ENCODE measurements at regions of chr10 and their contacts with region 1.

Region 1: GRCh38 chr10:103685880-103686669 is 169.3 kb downstream of the SH3PXD2A start:
- DNase-seq: peak; percentile 93

Region 2: GRCh38 chr10:103598654-103599115 is 87.4 kb before region 1 on chr10:
- CTCF ChIA-PET with region 1: interaction called, 21 read pairs
- POLR2A ChIA-PET with region 1: no interaction called
- DNase-seq: peak; percentile 87

Region 3: GRCh38 chr10:103659674-103660363 is 26.3 kb before region 1 on chr10:
- CTCF ChIA-PET with region 1: interaction called, 19 read pairs
- POLR2A ChIA-PET with region 1: interaction called, 4 read pairs
- DNase-seq: peak; percentile 45

Region 4: GRCh38 chr10:103666087-103666761 is 19.9 kb before region 1 on chr10:
- CTCF ChIA-PET with region 1: interaction called, 19 read pairs
- POLR2A ChIA-PET with region 1: interaction called, 3 read pairs
- DNase-seq: peak; percentile 70

Region 5: GRCh38 chr10:103696411-103697145 is 10.5 kb after region 1 on chr10:
- CTCF ChIA-PET with region 1: interaction called, 21 read pairs
- POLR2A ChIA-PET with region 1: no interaction called
- DNase-seq: peak; percentile 74

Region 6: DNA sequence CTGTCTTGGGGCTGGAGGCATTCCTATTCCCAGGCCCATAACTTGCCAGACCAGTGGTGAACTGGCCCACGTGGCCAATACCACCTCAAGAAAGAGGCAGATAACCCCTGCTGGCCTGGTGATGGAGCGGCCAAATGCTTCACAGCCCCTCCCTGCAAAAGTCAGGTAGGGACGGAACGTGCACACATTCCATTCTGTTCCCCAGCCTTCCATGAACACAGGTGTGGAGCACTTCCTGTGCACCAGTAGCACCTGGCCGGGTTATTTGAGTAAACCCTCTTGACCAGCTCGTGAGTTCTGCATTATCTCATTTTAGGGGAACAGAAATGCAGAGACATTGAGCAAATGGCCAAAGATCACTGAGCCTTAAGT is 34.9 kb after region 1 on chr10:
- CTCF ChIA-PET with region 1: no interaction called
- POLR2A ChIA-PET with region 1: no interaction called
- DNase-seq: no peak

Measured in HEK293T (cell line).